ENCODE measurements at regions of chr16 and their contacts with region 1.

Region 1: DNA sequence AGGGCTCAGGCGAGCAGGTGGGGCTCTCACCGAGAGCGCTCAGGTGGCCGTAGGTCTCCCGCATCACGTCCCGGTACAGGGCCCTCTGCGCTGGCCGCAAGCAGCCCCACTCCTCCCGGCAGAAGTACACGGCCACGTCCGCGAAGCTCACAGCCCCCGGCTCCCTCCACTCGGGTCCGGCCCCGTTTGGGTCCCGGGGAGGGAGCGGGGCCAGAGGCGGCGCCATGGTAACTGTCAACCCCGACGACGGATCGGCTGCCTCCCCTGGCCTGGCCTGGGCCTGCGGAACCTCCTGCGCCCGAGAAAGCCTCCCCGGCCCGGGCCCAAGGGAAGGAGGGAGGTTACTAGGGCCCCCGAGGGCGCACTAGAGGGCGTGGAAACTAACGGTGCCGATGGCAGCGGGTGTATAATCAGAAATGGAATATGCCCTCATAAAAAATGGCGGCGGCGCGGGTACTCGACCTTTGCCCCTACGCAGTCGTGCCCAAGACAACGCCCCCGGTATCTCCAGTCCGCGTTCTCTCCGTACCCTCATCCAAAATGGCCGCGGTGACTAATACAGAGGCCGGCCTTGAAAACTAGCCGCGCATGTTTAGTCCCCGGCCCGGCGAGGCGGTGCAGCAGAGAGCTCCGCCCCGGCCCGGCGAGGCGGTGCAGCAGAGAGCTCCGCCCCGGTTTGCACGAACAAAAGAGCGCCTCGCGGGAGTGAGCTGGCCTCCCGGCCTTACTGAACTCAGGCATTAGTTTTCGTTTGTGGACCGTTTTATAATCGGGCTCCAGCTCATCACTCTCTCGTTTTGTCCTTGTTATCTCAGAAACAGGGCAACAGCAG is at the start of gene ZNF764:
- DNase-seq: peak; percentile 96 to 99
- H3K4me3 ChIP-seq: peak within 1 kb of the TSS; percentile 91
- H3K27ac ChIP-seq: peak within 1 kb of the TSS; percentile 92 to 94
- H3K4me1 ChIP-seq: peaks cover 9 to 10% of the 10 kb centered on the region in 2 donors
- H3K27me3 ChIP-seq: no peaks in the 10 kb centered on the region
- CTCF ChIP-seq: peak in 1 of 3 experiments; percentile 1
- total RNA-seq, gene ZNF764: 10.9 TPM

Region 2: DNA sequence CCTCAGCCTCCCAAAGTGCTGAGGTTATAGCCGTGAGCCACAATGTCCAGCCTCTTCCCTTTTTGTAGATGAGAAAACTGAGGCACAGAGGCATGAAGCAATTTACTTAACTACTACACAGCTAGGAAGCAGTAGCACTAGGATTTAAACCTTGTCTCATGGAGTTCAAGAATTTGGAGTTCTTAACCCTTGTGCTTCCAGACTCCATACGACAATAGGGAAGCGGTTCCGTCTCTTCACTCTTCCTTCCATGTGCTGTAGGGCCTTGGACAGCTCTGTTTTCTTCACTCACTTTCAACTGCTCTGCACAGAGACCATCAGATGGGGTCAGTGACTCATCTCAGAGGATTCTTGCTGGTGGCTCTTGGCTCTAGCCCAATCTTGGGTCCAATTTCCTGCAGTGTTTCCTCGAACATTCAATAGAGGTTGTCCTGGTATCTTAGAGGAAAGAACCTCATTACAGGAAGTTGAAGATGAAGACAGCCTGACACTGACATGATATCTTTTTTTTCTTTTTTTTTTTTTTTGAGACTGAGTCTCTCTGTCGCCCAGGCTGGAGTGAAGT is 66.3 kb before region 1 on chr16:
- intact Hi-C with region 1: no loop called
- DNase-seq: no peak
- H3K4me3 ChIP-seq: no peak overlapping the region
- H3K27ac ChIP-seq: no peak overlapping the region
- H3K4me1 ChIP-seq: no peaks in the 10 kb centered on the region
- H3K27me3 ChIP-seq: no peaks in the 10 kb centered on the region
- CTCF ChIP-seq: no peak

Region 3: DNA sequence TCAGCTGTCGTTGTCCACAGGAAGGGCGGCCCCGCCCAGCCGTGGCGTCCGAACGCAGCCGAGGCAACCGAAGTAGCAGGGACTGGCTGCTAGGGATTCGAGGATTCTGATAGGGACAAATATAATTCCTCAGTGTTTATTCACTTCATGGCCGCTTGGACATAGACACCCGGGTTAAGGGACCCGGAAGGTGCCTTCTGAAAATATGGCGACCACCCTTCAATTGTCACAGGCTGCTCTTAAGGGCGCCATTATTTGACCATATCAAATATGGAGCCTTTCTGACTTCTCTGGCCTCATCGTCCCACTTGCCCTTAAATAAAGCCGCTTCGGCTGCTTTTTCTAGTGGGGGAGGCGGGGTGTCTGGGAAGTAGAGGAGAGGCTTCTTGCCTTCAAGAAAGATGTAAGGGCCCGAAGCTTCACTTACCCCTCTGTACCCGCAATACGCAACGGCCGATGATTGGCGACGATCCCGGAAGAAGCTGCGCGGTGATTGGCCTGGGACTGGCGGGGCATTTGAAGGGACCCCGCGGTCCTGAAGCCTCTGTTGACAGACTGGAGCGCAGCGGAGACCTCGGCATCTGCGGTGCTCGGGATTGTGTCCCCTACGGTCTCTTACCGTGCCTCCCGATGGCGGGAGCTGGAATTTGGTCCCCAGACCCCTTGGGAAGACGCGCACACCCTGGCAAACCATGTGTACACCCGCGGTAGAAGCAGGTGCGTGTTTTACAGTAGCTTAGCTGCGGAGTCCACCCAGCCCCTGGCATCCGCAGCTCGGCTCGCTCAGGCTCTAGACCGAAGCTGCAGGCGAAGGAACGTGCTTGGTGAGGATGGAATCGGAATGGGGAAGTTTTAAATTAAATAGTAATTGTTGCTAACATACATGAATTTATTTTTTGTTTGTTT is 13.8 kb after region 1 on chr16 and contains the start of gene ZNF688:
- intact Hi-C with region 1: loop called (anchors 1 kb)
- DNase-seq: peak; percentile 97 to 99
- H3K4me3 ChIP-seq: peak within 1 kb of the TSS; percentile 83 to 92
- H3K27ac ChIP-seq: peak within 1 kb of the TSS; percentile 96 to 99
- H3K4me1 ChIP-seq: peaks cover 13 to 21% of the 10 kb centered on the region in 2 donors
- H3K27me3 ChIP-seq: no peaks in the 10 kb centered on the region
- CTCF ChIP-seq: peak in 1 of 3 experiments; percentile 17
- total RNA-seq, gene ZNF688: 11.3 TPM